Left lung (tissue), 14 donors: ENCODE measurements at regions of chr4 and their contacts with region 1.

Region 1: GRCh38 chr4:110211007-110211769 is 12.8 kb upstream of the ELOVL6 start:
- DNase-seq: peak in 1 of 4 donors; percentile 35
- ATAC-seq: peak; percentile 78
- H3K4me3 ChIP-seq: no peak overlapping the region
- H3K27ac ChIP-seq: no peak overlapping the region
- H3K4me1 ChIP-seq: no peaks in the 10 kb centered on the region
- H3K27me3 ChIP-seq: no peaks in the 10 kb centered on the region
- CTCF ChIP-seq: peak; percentile 63 to 75

Region 2: DNA sequence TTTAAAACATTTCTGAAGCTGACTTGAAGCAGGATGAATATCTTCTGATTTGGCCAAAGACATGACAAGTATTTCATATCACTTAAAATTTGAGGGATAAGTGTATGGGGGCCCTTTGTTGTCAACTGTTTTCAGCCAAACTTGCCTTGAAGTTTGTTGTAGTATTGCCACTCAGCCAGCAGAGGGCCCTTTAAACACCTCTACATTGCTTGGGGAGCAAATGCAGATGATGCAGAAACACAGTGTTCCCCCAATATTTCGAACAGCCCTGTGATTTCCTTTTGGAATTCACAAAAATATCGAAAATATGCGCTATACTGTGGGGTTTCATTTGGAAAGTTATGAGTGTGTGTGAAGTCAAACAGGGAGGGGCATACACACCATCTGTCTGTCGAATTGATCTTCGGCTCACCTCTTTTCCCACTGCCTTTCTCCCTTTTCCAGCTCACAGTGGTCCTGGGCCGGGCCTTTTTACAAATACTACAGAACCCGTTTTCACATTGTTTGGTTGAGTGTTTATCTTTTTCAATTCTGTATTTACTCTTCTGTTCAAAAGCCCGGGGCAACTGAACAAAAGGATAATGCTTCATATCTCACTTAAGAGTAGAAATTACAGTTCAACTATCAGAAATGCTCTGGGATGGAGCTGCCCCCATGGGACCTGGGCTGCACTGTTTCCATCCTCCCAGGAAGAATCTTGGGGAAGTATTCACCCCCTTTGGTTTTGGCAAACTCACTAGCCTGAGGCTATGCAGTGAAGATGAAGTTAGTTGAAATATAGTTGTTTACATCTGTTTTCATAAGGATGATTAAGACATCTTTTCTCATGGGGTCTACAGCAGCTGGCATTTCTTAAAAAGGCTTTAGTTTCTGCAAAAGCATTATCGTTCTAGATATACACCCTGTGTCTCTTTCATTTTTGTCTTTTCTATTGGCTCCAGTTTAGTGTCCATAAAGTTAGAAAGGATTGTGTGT is 160.9 kb before region 1 on chr4:
- intact Hi-C with region 1: loop called in 1 of 2 experiments (anchors 5 kb)
- DNase-seq: peak in 1 of 4 donors; percentile 31
- ATAC-seq: peak; percentile 74
- H3K4me3 ChIP-seq: no peak overlapping the region
- H3K27ac ChIP-seq: no peak overlapping the region
- H3K4me1 ChIP-seq: no peaks in the 10 kb centered on the region
- H3K27me3 ChIP-seq: peaks cover 0 to 2% of the 10 kb centered on the region in 2 donors
- CTCF ChIP-seq: peak; percentile 65 to 82